GM12878 (cell line): ENCODE measurements at regions of chr17 and their contacts with region 1.

Region 1: DNA sequence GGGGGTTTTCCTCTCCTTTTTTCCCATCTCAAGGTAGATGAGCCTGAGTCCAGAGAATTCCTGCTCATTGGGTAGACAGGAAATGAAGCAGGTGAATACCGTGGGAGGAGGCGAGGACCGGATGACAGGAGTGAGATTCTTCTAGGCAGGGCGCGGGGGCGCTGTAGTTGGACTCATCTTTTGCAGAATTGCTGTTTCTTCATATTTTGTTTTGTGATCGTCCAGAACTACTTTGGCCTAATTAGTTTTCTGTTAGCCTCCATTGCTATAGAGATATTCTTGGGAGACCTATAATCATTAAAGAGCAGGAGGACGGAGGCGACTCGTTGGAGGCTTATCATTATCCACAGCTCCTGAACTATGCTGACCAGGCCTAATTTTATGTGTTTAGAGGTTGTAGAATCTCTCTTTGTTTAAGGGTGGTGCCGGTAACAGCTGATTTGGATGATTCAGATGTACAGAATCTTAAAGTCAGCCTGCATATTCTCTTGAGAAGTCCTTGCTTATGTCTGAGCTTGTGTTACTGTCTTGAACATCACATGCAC is 650 bp downstream of the ATP6V0A1 start:
- DNase-seq: no peak
- ATAC-seq: peak; percentile 57
- H3K4me3 ChIP-seq: peak overlapping the region; percentile 88
- H3K27ac ChIP-seq: peak overlapping the region; percentile 81
- H3K4me1 ChIP-seq: peaks cover 16% of the 10 kb centered on the region
- H3K27me3 ChIP-seq: no peaks in the 10 kb centered on the region
- CTCF ChIP-seq: peak; percentile 51 to 54 (median 54)
- EP300 ChIP-seq: no peak
- POLR2A ChIP-seq: no peak
- RAD21 ChIP-seq: no peak

Region 2: GRCh38 chr17:42517516-42517915 is 58.2 kb after region 1 on chr17:
- CTCF ChIA-PET with region 1: interaction called, 19 read pairs
- POLR2A ChIA-PET with region 1: interaction called, 4 read pairs
- RAD21 ChIA-PET with region 1: interaction called, 5 read pairs
- SMC1A ChIA-PET with region 1: interaction called, 9 read pairs
- in situ Hi-C with region 1: no loop called
- intact Hi-C with region 1: no loop called
- DNase-seq: no peak
- ATAC-seq: peak; percentile 85
- H3K4me3 ChIP-seq: no peak overlapping the region
- H3K27ac ChIP-seq: no peak overlapping the region
- H3K4me1 ChIP-seq: peaks cover 4% of the 10 kb centered on the region
- H3K27me3 ChIP-seq: no peaks in the 10 kb centered on the region
- CTCF ChIP-seq: peak; percentile 93 to 98 (median 98); a peak in 5 of 6 replicates
- EP300 ChIP-seq: no peak
- POLR2A ChIP-seq: no peak
- RAD21 ChIP-seq: peak; percentile 85